Transverse colon (tissue), 4 donors: ENCODE measurements at regions of chr9 and their contacts with region 1.

Region 1: DNA sequence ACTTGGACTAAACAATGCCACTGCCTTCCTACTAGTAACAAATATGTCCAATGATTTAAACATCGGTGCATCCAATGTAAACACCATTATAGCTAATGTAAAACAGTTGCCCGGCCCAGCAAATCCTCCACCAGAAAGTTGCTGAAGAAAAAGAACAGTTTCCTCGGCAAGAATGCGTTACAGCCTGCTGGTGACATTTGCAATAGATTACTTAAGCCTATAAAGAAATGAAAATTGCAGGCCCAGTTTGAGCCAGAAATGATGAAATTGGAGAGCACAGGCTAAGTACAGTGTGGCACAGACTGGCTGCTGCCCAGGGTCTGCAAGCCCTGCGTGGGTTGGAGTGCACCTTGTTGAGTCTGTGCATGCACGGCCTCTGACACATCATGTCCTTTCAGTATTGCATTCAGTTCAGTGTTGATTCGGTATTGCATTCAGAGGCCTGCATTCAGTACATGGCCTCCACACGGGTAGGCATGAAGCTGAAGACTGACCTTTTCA is 406.0 kb upstream of the KLF4 start:
- DNase-seq: no peak
- H3K4me3 ChIP-seq: no peak overlapping the region
- H3K27ac ChIP-seq: peak overlapping the region in 3 of 4 donors; percentile 7 to 48 (median 10)
- H3K4me1 ChIP-seq: peaks cover 0 to 14% (median 3%) of the 10 kb centered on the region in 4 donors
- H3K27me3 ChIP-seq: no peaks in the 10 kb centered on the region
- CTCF ChIP-seq: no peak
- EP300 ChIP-seq: no peak
- POLR2A ChIP-seq: no peak

Region 2: GRCh38 chr9:107929443-107929842 is 33.9 kb after region 1 on chr9:
- in situ Hi-C with region 1: no loop called
- intact Hi-C with region 1: loop called (anchors 1 kb)
- DNase-seq: peak; percentile 77
- H3K4me3 ChIP-seq: no peak overlapping the region
- H3K27ac ChIP-seq: no peak overlapping the region
- H3K4me1 ChIP-seq: peaks cover 0 to 18% (median 0%) of the 10 kb centered on the region in 4 donors
- H3K27me3 ChIP-seq: no peaks in the 10 kb centered on the region
- CTCF ChIP-seq: no peak
- EP300 ChIP-seq: no peak
- POLR2A ChIP-seq: no peak